A549 (cell line): ENCODE measurements at regions of chr10 and their contacts with region 1.

Region 1: DNA sequence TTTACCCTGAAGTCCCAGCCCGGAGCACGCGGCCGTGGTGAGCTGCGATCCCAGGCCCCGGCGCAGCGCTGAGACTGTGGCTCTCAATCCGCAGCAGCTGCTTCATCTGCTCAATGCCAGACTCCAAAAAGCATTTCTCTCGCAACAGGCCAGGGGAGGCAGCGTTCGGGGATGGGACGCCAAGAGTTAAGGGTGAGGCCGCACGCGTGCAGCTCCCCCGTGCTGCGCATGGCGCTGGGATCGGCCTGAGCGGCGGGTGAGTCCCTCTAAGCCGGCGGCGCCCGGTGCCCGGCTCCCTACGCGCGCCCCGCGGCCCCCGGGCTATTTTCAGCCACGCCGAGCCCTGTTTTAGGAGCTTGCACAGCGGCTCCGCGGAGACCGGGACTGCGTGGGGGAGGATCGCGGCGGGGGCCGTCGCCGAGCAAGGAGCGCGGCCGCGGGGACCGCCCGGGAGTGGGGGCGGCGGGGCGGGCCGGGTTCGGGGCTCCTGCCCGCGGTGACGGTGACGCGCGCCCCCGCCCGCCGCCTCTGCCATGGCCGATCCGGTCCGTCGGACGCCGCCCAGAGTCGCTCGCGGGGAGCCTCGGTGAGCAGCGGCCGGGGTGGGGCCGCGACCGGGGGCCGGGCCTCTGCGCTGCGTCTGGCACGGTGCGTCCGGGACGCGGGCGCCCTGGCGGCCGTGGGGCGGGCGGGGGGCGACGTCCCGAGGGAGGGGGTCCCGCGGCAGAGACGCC is 29.4 kb upstream of the JAKMIP3 start:
- DNase-seq: peak; percentile 52 to 57
- ATAC-seq: peak; percentile 71 to 79
- H3K4me3 ChIP-seq: peak overlapping the region; percentile 82
- H3K27ac ChIP-seq: peak overlapping the region; percentile 87 to 91
- H3K4me1 ChIP-seq: 0 out of 3 replicates have a peak, but pooled peaks cover 3% of the 10 kb centered on the region
- CTCF ChIP-seq: no peak
- EP300 ChIP-seq: no peak
- POLR2A ChIP-seq: no peak
- RAD21 ChIP-seq: no peak

Region 2: DNA sequence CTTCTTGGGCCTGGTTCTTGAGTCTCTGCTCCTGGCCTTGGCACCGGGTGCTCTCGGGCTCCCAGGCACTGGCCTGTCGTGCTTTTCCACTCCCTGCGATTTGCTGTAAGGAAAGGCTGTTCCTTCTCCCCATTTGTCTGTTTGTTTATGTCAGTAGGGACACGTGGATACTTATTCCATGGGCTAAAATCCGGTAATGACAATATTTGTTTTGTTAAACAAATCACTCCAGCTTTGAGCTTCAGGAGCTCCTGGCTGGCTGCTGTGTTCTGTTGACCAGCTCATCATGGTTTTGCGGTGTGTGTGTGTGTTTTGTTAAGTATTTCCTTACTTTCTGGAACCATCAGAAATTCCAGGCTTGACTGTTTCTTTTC is 12.0 kb after region 1 on chr10:
- CTCF ChIA-PET with region 1: interaction called, 22 read pairs
- POLR2A ChIA-PET with region 1: no interaction called
- DNase-seq: peak in 1 of 2 experiments; percentile 33
- ATAC-seq: peak; percentile 12 to 18; a peak in 2 of 6 replicates
- H3K4me3 ChIP-seq: no peak overlapping the region
- H3K27ac ChIP-seq: no peak overlapping the region
- H3K4me1 ChIP-seq: no peaks in the 10 kb centered on the region
- CTCF ChIP-seq: no peak
- EP300 ChIP-seq: no peak
- POLR2A ChIP-seq: no peak
- RAD21 ChIP-seq: no peak